ENCODE measurements at regions of chr16 and their contacts with region 1.

Region 1: DNA sequence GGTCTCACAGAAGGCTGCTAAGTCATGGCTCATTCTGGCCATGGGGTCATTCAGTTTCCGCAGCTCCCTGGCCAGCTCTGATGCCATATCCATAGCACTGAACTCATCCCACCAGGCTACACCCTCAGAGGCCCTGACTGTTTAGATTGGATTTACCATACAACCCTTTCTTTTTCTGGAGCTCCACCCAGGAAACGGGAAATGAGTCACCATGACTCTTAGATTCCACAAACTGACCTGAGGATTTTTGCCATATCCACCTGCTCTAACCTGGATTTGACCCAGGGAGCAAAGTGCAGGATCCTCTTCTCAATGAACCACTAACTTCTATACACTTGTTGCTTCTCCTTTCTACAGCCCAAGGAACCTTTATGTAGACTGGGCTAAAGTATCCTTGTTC is 20.3 kb upstream of the CALB2 start:
- DNase-seq: peak; percentile 82 to 98
- H3K4me3 ChIP-seq: no peak overlapping the region
- H3K27ac ChIP-seq: peak overlapping the region; percentile 100
- H3K4me1 ChIP-seq: peaks cover 47% of the 10 kb centered on the region
- H3K27me3 ChIP-seq: no peaks in the 10 kb centered on the region
- CTCF ChIP-seq: no peak

Region 2: DNA sequence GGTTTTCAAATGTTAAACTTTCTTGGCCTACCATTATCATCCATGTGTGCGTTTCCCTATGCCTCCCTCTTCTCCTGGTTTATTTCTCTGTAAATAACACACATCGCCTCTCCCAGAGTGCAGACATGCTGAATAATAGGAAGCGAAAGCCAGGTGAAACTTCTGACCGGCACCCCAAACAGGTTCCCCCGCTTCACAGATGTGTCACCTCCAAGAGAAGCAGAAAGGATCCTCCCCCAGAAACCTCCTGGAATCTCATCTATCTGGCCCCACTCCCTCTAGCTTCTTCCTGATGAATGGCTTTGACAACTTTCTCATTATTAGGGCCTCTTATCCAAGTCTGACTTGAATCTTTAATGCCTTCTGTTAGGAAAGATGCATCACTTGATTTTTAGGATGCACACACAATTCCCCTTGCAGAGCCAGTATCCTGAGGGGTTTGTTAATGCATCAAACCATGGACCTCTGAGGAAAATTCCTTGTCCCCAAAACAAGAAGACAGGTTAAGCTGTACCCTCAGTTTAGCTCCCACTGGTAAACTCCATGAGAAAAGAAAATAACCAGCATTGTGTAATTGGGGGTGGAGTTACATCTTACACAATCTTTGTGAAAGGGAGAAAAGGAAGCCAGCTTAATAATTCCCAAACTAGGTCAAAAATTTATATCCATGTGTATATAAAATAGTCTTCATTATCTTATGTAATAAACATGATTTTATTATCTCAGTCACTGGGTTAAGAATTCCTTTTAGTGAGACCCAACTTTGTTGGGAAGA is 87.5 kb before region 1 on chr16:
- CTCF ChIA-PET with region 1: no interaction called
- POLR2A ChIA-PET with region 1: no interaction called
- intact Hi-C with region 1: loop called (anchors 1 kb)
- DNase-seq: peak; percentile 76 to 88
- H3K4me3 ChIP-seq: no peak overlapping the region; the same call in 1 of the 2 replicates
- H3K27ac ChIP-seq: peak overlapping the region; percentile 79
- H3K4me1 ChIP-seq: peaks cover 23% of the 10 kb centered on the region
- H3K27me3 ChIP-seq: no peaks in the 10 kb centered on the region
- CTCF ChIP-seq: 0 out of 2 replicates have a peak, but pooled peaks have one; percentile 32

Region 3: GRCh38 chr16:71260995-71261394 is 77.2 kb before region 1 on chr16:
- CTCF ChIA-PET with region 1: no interaction called
- POLR2A ChIA-PET with region 1: no interaction called
- intact Hi-C with region 1: no loop called
- DNase-seq: no peak
- H3K4me3 ChIP-seq: no peak overlapping the region
- H3K27ac ChIP-seq: no peak overlapping the region
- H3K4me1 ChIP-seq: no peaks in the 10 kb centered on the region
- H3K27me3 ChIP-seq: no peaks in the 10 kb centered on the region
- CTCF ChIP-seq: no peak

Region 4: DNA sequence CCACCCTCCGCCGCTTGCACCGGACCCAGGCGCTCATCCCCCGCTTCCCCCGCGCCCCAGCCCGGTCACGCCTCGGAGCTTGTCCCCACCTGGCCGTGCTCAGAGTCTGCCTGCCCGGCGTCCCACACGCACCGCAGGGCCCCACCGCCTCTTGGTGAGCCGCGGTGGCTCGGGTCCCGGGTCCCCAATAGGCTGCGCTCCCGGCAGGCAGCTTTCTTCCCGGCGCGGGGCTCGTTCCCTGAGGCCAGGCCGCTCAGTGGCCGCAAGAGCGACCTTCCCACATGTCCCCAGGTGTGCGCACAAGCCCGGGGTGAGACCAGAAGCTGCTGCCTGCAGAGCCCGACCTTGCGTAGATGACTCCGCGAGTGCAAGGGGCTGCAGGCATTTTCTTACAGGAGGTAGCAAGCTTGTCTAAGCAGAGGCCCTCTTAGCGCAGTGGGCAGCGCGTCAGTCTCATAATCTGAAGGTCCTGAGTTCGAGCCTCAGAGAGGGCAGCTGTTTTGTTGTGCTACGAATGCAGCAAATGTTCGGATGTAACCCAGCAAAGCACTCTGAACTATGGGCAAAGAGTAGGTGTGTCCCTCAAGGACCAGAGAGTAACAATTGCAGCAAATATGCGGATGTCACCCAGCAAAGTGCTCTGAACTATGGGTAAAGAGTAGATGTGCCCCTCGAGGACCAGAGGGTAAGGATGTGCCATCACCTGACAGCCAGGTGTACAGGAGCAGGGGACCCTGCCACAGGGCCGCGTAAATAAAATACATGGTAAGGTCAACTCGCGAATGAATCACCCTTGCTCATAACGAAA is 88.1 kb after region 1 on chr16:
- CTCF ChIA-PET with region 1: no interaction called
- POLR2A ChIA-PET with region 1: no interaction called
- intact Hi-C with region 1: no loop called
- DNase-seq: peak; percentile 31 to 76
- H3K4me3 ChIP-seq: no peak overlapping the region
- H3K27ac ChIP-seq: no peak overlapping the region
- H3K4me1 ChIP-seq: no peaks in the 10 kb centered on the region
- H3K27me3 ChIP-seq: peaks cover 24% of the 10 kb centered on the region
- CTCF ChIP-seq: no peak

Region 5: DNA sequence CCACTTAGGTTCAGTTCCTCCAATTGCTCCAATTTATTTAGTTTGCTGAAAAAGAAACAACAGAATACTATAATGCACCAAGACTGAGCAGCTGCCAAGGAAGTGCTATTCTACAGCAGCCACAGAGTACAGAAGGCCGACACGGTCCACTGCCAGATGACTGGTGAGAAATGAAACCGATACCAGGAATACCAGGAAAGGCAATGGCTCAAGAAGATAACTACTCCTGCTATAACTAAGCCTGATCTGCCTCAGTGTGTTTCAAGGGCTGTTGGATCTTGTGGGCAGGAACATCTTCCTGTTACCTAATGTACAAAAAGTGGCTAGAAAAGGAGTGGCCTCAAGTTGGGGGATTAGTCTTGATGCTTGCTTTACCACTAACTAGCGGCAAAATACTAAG is 320.6 kb after region 1 on chr16:
- CTCF ChIA-PET with region 1: no interaction called
- POLR2A ChIA-PET with region 1: no interaction called
- intact Hi-C with region 1: no loop called
- DNase-seq: no peak
- H3K4me3 ChIP-seq: no peak overlapping the region
- H3K27ac ChIP-seq: no peak overlapping the region
- H3K4me1 ChIP-seq: no peaks in the 10 kb centered on the region
- H3K27me3 ChIP-seq: no peaks in the 10 kb centered on the region
- CTCF ChIP-seq: no peak